Activated CD8-positive, alpha-beta T cell treated with anti-CD3 and anti-CD28 coated beads, Interleukin-2, amount 10 ng/mL, durations not matched to agents 7 days and 5 days (primary cell): ENCODE measurements at regions of chr3 and their contacts with region 1.

Region 1: GRCh38 chr3:155805802-155806618 is at the start of gene C3orf33:
- DNase-seq: peak; percentile 75
- ATAC-seq: peak; percentile 99
- H3K4me3 Mint-ChIP-seq: peak within 1 kb of the TSS; percentile 81
- H3K27ac Mint-ChIP-seq: peak within 1 kb of the TSS; percentile 80
- H3K4me1 Mint-ChIP-seq: peaks cover 10% of the 10 kb centered on the region
- H3K27me3 Mint-ChIP-seq: peaks cover 14% of the 10 kb centered on the region
- total RNA-seq, gene C3orf33: 0.60 to 1.3 TPM

Region 2: GRCh38 chr3:155791190-155791589 is 14.8 kb before region 1 on chr3:
- CTCF ChIA-PET with region 1: interaction called, 15 read pairs
- POLR2A ChIA-PET with region 1: no interaction called
- DNase-seq: no peak
- ATAC-seq: no peak
- H3K4me3 Mint-ChIP-seq: no peak overlapping the region
- H3K27ac Mint-ChIP-seq: no peak overlapping the region
- H3K4me1 Mint-ChIP-seq: peaks cover under 1% of the 10 kb centered on the region
- H3K27me3 Mint-ChIP-seq: no peaks in the 10 kb centered on the region

Region 3: DNA sequence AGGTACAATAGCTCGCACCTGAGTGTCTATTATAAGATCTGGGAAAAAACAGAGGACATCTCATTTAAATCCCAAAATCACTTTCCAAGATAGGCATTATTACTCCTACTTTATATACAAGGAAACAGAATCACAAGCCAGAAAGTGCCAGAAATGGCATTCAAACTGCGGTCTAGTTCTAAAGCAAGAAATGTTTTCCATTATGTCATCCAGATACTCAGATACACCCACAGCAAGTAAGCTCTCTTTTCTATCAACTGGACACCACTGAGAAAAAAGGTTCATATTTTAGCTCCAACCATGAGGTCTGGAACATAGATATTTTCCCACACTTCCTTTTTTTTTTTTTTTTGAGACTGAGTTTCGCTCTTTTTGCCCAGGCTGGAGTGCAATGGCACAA is 40.1 kb after region 1 on chr3:
- CTCF ChIA-PET with region 1: interaction called, 53 read pairs
- POLR2A ChIA-PET with region 1: no interaction called
- DNase-seq: no peak
- ATAC-seq: no peak
- H3K4me3 Mint-ChIP-seq: no peak overlapping the region
- H3K27ac Mint-ChIP-seq: no peak overlapping the region
- H3K4me1 Mint-ChIP-seq: peaks cover 32% of the 10 kb centered on the region
- H3K27me3 Mint-ChIP-seq: no peaks in the 10 kb centered on the region

Region 4: DNA sequence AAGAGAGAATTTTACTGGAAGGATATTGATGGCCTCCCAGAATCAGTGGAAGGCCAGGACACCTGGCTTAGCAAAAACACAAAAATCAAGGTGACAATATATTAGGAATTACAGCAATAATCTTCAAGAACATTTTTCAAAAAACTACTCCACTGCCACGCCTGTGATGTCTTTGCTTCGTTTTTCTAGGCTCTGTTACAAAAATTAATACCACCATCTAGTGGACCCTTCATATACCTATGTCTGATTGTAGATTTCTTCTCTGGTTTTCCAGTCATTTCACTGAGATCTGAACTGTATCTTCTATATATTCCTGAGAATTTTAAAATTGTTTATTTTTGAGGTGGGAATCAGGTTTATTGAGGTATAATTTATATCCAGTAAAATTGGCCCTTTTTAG is 53.8 kb after region 1 on chr3:
- CTCF ChIA-PET with region 1: interaction called, 25 read pairs
- POLR2A ChIA-PET with region 1: no interaction called
- DNase-seq: no peak
- ATAC-seq: peak; percentile 38
- H3K4me3 Mint-ChIP-seq: no peak overlapping the region
- H3K27ac Mint-ChIP-seq: no peak overlapping the region
- H3K4me1 Mint-ChIP-seq: peaks cover 37% of the 10 kb centered on the region
- H3K27me3 Mint-ChIP-seq: no peaks in the 10 kb centered on the region

Region 5: GRCh38 chr3:155880286-155880685 is 74.3 kb after region 1 on chr3:
- CTCF ChIA-PET with region 1: interaction called, 14 read pairs
- POLR2A ChIA-PET with region 1: no interaction called
- DNase-seq: no peak
- ATAC-seq: no peak
- H3K4me3 Mint-ChIP-seq: no peak overlapping the region
- H3K27ac Mint-ChIP-seq: no peak overlapping the region
- H3K4me1 Mint-ChIP-seq: peaks cover 35% of the 10 kb centered on the region
- H3K27me3 Mint-ChIP-seq: no peaks in the 10 kb centered on the region

Region 6: DNA sequence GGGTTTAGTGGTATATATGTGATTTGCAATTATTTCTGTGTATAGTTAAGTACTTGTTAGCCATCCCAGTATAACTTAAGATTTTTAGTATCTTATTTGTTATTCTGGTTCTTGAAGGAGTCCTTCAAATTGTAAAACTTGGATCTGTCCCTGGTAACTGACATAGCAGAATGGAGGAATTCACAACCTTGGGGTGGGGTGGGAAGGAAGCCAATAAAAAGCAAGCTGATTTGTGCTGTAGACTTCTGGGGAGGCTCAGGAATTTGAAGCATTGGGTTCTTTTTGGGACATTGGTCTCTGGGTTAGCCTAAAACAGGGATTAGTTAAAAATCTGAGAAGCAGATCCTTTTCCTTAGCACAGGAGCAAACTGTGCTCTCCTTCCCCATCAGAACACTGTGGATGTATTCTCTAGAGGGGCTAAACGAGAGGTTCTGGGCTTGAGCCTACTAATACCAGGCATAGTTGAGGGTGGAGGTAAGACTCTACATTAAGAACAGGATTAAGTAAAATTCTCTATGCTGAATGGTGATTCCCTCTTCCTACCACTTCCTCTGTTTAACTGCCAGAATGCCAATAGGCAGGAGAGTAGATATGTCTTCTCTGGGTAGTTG is 106.7 kb after region 1 on chr3:
- CTCF ChIA-PET with region 1: interaction called, 10 read pairs
- POLR2A ChIA-PET with region 1: no interaction called
- DNase-seq: no peak
- ATAC-seq: no peak
- H3K4me3 Mint-ChIP-seq: no peak overlapping the region
- H3K27ac Mint-ChIP-seq: no peak overlapping the region
- H3K4me1 Mint-ChIP-seq: peaks cover 13% of the 10 kb centered on the region
- H3K27me3 Mint-ChIP-seq: no peaks in the 10 kb centered on the region

Region 7: DNA sequence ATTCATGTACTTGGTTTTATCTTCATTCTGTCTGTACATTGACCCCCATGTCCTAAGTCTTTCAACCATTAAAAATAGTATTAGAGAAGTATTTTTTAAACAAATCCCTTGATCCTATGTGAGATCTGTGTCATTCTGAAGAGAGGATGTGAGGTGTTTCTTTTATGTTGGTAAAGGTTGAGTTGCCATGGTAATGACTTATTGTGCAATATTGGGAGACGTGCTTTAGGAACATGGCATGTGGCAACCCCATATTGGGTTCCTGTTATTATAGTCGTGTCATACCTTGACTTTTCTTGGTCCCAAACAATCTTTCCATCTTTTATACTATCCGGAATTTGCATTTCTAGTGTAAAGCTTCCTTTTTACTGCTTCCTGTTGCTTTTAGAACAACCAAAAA is 517.5 kb after region 1 on chr3:
- CTCF ChIA-PET with region 1: no interaction called
- POLR2A ChIA-PET with region 1: no interaction called
- DNase-seq: no peak
- ATAC-seq: no peak
- H3K4me3 Mint-ChIP-seq: no peak overlapping the region
- H3K27ac Mint-ChIP-seq: no peak overlapping the region
- H3K4me1 Mint-ChIP-seq: no peaks in the 10 kb centered on the region
- H3K27me3 Mint-ChIP-seq: peaks cover 16% of the 10 kb centered on the region